Right ventricle myocardium superior (tissue), 1 donor: ENCODE measurements at regions of chr3 and their contacts with region 1.

Region 1: GRCh38 chr3:72938471-72939265 is 50.8 kb downstream of the GXYLT2 start:
- DNase-seq: no peak
- ATAC-seq: peak; percentile 91

Region 2: GRCh38 chr3:72996473-72997333 is 58.0 kb after region 1 on chr3 and contains the start of gene PPP4R2:
- intact Hi-C with region 1: loop called (anchors 10 kb)
- DNase-seq: peak; percentile 94
- ATAC-seq: peak; percentile 97
- total RNA-seq, gene PPP4R2: 58.6 TPM

Region 3: GRCh38 chr3:73056014-73056844 is 117.6 kb after region 1 on chr3:
- intact Hi-C with region 1: loop called (anchors 2 kb)
- DNase-seq: no peak
- ATAC-seq: peak; percentile 71

Region 4: DNA sequence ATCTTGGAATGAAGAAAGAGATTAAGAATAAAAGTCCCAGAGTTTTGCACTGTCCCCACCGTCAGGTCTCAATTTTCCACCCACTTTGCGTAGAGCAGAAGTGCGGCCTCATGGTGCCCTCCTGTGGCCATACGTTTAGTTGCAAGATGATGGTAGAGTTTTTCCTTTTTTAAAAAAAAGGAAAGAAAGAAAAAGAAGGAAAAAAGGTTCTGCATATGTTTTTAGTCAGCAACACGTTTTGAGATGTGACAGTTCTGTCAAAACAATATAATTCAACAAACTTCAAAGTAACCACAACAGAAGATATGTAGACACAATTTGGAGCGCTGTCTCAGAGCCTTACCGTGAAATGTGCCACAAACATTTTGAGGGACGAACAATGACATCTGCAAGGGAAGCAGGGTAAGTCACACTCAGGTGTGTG is 147.4 kb after region 1 on chr3:
- intact Hi-C with region 1: loop called (anchors 10 kb)
- DNase-seq: peak; percentile 55
- ATAC-seq: peak; percentile 79